Panc1 (cell line): ENCODE measurements at regions of chr9 and their contacts with region 1.

Region 1: DNA sequence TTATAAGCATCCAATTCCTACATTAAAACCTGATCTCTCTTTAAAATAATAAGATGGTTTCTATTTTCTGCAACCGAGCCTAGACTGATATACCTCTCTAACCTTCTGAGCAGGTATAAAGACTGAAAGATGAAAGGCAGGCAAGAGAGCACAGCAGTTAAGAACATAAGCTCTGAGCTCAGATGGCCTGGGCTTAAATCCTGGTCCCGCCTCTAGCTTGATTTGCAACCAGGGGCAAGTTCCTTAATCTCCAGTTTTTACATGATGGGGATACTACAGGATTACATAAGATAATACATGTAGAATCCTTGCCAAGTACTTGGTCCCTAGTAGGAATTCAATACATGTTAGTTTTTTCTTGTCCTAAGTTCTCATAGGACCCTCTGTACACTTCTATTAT is 33.9 kb downstream of the SLC24A2 start:
- DNase-seq: no peak
- ATAC-seq: no peak
- H3K4me3 ChIP-seq: no peak overlapping the region
- H3K27ac ChIP-seq: no peak overlapping the region
- H3K4me1 ChIP-seq: no peaks in the 10 kb centered on the region
- H3K27me3 ChIP-seq: no peaks in the 10 kb centered on the region
- CTCF ChIP-seq: no peak

Region 2: DNA sequence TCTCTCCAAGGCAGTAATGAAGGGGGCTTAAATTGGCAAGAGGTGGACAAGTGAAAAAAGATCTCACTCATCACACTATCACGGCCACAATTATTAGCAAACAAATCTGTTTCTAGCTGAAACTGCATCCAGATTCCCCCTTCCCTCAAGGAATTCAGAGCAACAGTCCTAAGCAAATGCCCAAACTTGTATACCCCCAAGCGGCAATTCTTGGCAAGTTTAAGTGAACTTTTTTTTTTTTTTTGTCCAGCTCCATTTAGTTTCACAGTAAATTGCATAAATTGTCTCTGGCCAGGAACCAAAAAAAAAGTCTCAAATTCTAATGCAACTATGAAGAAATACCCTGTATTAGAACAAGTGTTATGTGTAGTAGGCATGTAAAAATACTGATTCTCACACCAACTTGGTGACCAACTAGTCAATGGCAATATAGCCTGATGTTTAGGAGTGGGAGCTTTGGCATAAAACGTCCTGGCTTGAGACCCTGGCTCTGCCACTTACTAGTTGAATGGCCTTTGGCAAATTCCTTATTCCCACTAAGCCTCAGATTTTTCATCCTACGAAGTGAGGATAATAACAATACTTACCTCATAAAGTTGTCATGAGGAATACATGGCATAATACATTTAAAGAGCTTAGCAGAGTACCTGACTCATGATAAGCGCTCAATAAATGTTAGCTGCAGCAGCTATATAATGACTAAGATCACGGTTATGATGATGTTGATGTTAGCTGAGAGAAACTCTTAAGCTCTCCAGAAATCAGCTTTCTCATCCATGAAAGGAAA is 1087.7 kb before region 1 on chr9:
- CTCF ChIA-PET with region 1: interaction called, 14 read pairs
- POLR2A ChIA-PET with region 1: no interaction called
- in situ Hi-C with region 1: no loop called
- intact Hi-C with region 1: no loop called
- DNase-seq: no peak
- ATAC-seq: no peak
- H3K4me3 ChIP-seq: no peak overlapping the region
- H3K27ac ChIP-seq: no peak overlapping the region
- H3K4me1 ChIP-seq: no peaks in the 10 kb centered on the region
- H3K27me3 ChIP-seq: no peaks in the 10 kb centered on the region
- CTCF ChIP-seq: no peak